ENCODE measurements at regions of chr2 and their contacts with region 1.

Region 1: DNA sequence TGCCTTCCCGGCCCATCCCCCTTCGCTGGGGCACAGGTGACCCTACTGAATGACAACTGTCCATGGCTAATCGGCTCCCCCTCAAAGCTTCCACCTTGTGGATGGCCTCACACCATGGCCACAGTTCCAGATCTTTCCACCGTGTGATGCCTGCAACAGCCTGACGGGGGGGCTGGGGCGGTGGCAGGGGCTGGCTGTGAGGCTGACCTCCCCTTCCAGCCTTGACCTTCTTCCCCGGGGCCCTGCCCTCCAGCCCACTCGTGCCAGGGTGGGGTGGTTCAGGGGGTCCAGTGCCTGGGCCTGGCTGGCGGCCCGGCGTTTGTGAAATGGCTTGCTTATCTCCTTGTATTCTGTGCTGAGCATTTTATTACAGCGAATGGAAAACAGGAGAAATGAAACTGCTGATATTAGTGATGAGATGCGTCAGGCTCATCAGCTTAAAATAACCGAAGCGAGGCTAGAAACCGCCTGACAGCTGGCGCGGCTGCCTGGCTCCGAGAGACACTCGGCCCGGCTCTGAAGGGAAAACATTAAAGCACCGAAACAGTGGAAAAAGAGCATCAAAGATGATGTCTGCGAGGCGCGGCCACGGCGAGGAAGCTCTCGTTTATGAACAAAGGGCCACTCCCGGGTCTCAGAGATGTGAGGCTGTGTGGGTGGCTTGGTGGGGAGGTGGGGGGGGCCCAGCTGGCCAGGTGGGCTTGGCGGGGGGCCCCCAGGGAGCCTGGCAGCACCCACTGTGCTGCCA is 916 bp upstream of the PDCD1 start:
- DNase-seq: peak; percentile 88
- ATAC-seq: peak; percentile 47
- H3K4me3 Mint-ChIP-seq: peak overlapping the region; percentile 85
- H3K27ac Mint-ChIP-seq: peak overlapping the region; percentile 95
- H3K4me1 Mint-ChIP-seq: peaks cover 63% of the 10 kb centered on the region
- H3K27me3 Mint-ChIP-seq: peaks cover 11% of the 10 kb centered on the region

Region 2: GRCh38 chr2:241673797-241674725 is 185.5 kb before region 1 on chr2:
- CTCF ChIA-PET with region 1: no interaction called
- POLR2A ChIA-PET with region 1: no interaction called
- intact Hi-C with region 1: no loop called
- DNase-seq: no peak
- ATAC-seq: peak; percentile 47
- H3K4me3 Mint-ChIP-seq: no peak overlapping the region
- H3K27ac Mint-ChIP-seq: peak overlapping the region; percentile 51
- H3K4me1 Mint-ChIP-seq: peaks cover under 1% of the 10 kb centered on the region
- H3K27me3 Mint-ChIP-seq: no peaks in the 10 kb centered on the region

Region 3: GRCh38 chr2:241686649-241687425 is 172.8 kb before region 1 on chr2 and contains the start of gene DTYMK:
- CTCF ChIA-PET with region 1: no interaction called
- POLR2A ChIA-PET with region 1: interaction called, 5 read pairs
- intact Hi-C with region 1: loop called (anchors 5 kb)
- DNase-seq: peak; percentile 98
- ATAC-seq: peak; percentile 96
- H3K4me3 Mint-ChIP-seq: peak within 1 kb of the TSS; percentile 98
- H3K27ac Mint-ChIP-seq: peak within 1 kb of the TSS; percentile 96
- H3K4me1 Mint-ChIP-seq: peaks cover 32% of the 10 kb centered on the region
- H3K27me3 Mint-ChIP-seq: no peaks in the 10 kb centered on the region
- total RNA-seq, gene DTYMK: 79.8 to 93.1 TPM

Region 4: DNA sequence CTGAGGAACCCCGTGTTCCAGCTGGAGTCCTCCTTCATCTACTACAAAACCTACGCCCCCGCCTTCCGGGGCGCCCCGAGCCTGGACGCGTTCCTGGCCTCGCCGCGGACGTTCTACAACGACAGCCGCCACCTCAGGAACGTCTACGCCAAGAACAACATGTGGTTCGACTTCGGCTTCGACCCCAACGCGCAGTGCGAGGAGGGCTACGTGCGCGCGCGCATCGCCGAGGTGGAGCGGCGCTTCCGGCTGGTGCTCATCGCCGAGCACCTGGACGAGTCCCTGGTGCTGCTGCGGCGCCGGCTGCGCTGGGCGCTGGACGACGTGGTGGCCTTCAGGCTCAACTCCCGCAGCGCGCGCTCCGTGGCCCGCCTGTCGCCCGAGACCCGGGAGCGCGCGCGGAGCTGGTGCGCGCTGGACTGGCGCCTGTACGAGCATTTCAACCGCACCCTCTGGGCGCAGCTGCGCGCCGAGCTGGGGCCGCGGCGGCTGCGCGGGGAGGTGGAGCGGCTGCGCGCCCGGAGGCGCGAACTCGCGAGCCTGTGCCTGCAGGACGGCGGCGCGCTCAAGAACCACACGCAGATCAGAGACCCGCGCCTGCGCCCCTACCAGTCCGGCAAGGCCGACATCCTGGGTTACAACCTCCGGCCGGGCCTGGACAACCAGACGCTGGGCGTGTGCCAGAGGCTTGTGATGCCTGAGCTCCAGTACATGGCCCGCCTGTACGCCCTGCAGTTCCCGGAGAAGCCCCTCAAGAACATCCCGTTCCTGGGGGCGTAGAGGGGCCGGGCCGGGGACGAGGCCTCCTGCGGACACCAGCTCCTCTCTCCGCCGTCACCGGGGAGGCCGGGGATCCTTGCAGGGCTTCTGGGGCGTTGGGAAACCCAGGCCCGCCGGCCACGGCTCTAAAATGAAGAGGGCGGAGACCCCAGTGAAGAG is 56.0 kb before region 1 on chr2:
- CTCF ChIA-PET with region 1: no interaction called
- POLR2A ChIA-PET with region 1: no interaction called
- intact Hi-C with region 1: loop called in 1 of 2 experiments (anchors 5 kb)
- DNase-seq: peak; percentile 69
- ATAC-seq: peak; percentile 76
- H3K4me3 Mint-ChIP-seq: peak overlapping the region; percentile 58
- H3K27ac Mint-ChIP-seq: peak overlapping the region; percentile 12
- H3K4me1 Mint-ChIP-seq: peaks cover 7% of the 10 kb centered on the region
- H3K27me3 Mint-ChIP-seq: peaks cover 6% of the 10 kb centered on the region

Region 5: DNA sequence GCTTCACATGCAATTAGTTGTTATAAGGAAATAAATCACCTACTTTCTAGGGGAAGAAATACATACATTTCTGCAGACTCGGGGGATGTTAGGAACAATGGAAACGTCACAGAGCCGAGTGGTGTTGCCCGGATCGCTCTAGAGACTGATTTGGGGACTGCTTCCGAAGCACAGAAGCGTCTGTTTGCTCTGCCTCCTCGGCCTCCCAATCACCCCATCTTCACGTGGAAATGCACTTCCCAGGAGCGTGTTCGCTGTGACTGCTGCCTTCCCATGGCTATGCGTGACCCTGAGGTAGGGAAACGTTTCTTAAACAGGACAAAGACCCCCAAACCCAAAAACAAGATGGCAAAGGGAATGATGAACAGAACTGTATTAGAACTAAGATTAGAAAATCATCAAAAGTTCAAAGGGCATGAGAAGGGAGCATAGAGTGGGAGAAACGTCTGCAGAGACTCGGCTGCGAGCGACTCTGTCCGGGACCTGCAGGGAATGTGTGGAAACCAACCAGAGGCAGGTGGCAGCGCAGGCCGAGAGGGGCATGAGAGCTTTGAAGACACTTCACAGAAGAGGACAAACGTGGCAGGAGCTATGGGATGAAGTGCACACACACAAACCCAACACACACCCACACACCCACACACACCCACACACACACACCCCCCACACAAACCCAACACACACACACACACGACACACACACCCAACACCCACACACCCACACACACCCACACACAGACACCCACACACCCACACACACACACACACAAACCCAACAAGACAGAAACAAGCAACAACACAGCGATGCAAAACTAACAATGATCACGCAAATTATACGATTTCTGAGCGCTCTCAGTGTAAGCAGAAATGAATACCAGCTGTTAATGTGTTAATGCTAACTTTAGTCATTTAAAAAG is 51.3 kb after region 1 on chr2:
- CTCF ChIA-PET with region 1: no interaction called
- POLR2A ChIA-PET with region 1: no interaction called
- intact Hi-C with region 1: no loop called
- DNase-seq: no peak
- ATAC-seq: no peak
- H3K4me3 Mint-ChIP-seq: no peak overlapping the region
- H3K27ac Mint-ChIP-seq: no peak overlapping the region
- H3K4me1 Mint-ChIP-seq: no peaks in the 10 kb centered on the region
- H3K27me3 Mint-ChIP-seq: no peaks in the 10 kb centered on the region